ENCODE measurements at regions of chr5 and their contacts with region 1.

Region 1: DNA sequence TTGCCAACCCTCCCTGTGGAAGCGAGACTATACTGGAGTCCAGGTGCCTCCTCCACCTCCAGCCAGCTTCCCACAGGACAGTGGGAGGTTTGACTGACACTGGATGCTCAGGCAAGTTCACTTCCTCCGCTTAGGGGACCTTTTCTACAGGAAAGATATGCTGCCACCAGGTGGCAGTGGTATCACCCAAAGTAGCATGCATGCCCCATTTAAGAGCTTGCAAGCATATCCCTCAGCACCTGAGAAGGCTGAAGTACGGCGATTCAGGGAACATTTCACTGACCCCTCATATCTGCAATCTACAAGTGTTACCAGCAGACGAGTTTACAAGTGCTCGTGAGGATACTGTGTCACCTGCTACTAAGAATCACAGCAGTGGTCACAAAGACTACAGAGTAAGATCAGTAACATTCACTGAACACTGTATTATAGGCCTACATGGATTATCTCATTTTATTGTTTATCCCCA is 75.5 kb downstream of the KLHL3 start:
- DNase-seq: peak; percentile 60 to 85 (median 67)
- ATAC-seq: peak; percentile 94
- H3K4me3 ChIP-seq: no peak overlapping the region
- H3K4me3 Mint-ChIP-seq: no peak overlapping the region
- H3K27ac ChIP-seq: no peak overlapping the region
- H3K27ac Mint-ChIP-seq: peak overlapping the region; percentile 3
- H3K4me1 ChIP-seq: peaks cover 6% of the 10 kb centered on the region
- H3K4me1 Mint-ChIP-seq: peaks cover 14% of the 10 kb centered on the region
- H3K27me3 ChIP-seq: no peaks in the 10 kb centered on the region
- H3K27me3 Mint-ChIP-seq: no peaks in the 10 kb centered on the region
- CTCF ChIP-seq: peak; percentile 89

Region 2: DNA sequence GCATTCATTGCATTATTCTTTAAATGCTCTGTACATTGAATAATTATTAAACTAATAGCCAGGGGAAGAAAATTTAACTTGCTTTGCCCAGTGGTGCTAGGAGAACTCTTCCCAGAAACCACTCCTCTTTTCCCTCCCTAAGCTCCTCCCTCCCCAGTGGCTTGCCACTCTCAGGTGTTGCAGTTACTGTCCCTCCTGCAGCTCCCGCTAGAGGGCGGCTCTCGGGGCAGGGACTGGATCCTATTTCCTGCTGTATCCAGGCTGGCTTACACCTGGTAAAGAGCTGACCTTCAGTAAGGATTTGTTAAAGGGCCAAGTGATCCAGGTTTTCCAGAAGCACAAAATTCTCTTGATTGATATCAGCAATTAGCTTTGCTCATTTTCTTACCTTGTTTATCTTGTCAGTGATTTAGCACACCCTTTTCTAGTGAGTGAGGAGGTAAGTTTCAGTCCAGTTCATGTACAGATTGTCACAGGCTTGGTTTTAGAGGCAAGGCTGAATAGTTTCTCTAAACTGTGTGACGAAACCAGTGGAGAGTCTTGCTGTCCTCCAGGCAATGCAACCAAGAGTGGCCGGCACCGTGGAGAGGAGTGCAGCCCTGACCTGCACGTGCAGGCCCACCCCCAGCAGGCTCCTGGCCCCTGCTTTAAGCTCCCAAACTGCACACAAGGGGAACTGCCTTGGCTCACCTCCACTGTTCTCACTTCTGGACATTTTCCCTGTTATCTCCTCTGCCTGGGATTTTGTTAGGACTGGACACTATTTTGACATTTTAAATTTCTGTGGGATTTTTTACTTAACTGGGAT is 585.0 kb before region 1 on chr5:
- CTCF ChIA-PET with region 1: no interaction called
- POLR2A ChIA-PET with region 1: no interaction called
- intact Hi-C with region 1: no loop called
- DNase-seq: no peak
- ATAC-seq: no peak
- H3K4me3 ChIP-seq: no peak overlapping the region
- H3K4me3 Mint-ChIP-seq: no peak overlapping the region
- H3K27ac ChIP-seq: no peak overlapping the region
- H3K27ac Mint-ChIP-seq: no peak overlapping the region
- H3K4me1 ChIP-seq: no peaks in the 10 kb centered on the region
- H3K4me1 Mint-ChIP-seq: no peaks in the 10 kb centered on the region
- H3K27me3 ChIP-seq: no peaks in the 10 kb centered on the region
- H3K27me3 Mint-ChIP-seq: peaks cover 20% of the 10 kb centered on the region
- CTCF ChIP-seq: no peak

Region 3: GRCh38 chr5:137629646-137630045 is 30.7 kb before region 1 on chr5:
- CTCF ChIA-PET with region 1: interaction called, 9 read pairs
- POLR2A ChIA-PET with region 1: no interaction called
- intact Hi-C with region 1: loop called in 1 of 2 experiments (anchors 1 kb)
- DNase-seq: peak in 5 of 14 experiments; percentile 7 to 75 (median 58)
- ATAC-seq: peak; percentile 61
- H3K4me3 ChIP-seq: no peak overlapping the region
- H3K4me3 Mint-ChIP-seq: no peak overlapping the region
- H3K27ac ChIP-seq: no peak overlapping the region
- H3K27ac Mint-ChIP-seq: no peak overlapping the region
- H3K4me1 ChIP-seq: no peaks in the 10 kb centered on the region
- H3K4me1 Mint-ChIP-seq: no peaks in the 10 kb centered on the region
- H3K27me3 ChIP-seq: no peaks in the 10 kb centered on the region
- H3K27me3 Mint-ChIP-seq: no peaks in the 10 kb centered on the region
- CTCF ChIP-seq: peak; percentile 88

Region 4: DNA sequence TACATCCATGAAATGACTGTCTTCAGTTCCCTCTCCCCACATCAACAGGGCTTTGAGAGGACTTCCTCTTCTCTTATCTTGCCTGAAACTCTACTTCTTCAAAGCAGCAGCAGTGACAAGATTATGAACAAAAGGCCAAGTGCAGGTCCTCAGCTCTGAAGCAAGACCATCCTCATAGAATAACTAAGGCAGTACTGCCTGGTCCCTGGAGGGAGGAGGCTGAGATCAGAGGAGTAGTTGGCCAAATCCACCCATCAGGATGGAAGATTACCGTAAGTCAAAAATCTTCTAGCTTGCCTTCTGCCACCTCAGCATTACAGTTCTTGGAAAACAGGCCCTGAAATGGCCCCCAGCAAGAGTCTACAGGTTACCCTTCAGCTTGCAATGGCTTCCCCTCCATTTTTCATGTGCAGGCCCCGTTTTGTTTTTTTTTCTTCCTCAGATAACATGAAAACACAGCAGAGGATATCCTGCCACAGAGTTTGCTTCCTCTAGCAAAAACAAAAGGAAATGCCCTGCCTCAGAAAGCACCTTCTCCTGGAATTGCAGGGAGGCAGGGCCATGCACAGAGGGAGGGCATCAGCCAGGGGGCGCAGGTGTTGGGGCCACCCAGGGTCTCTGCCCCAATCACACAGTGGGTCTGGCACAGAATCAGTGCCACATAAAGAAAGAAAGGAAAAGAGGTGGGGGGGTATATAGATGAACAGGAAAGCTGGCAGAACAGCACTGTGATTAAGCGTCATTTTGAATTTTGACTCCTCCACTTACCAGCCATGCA is 35.5 kb after region 1 on chr5:
- CTCF ChIA-PET with region 1: interaction called, 10 read pairs
- POLR2A ChIA-PET with region 1: interaction called, 7 read pairs
- intact Hi-C with region 1: loop called in 1 of 2 experiments (anchors 5 kb)
- DNase-seq: peak in 12 of 14 experiments; percentile 9 to 70 (median 34)
- ATAC-seq: peak; percentile 90
- H3K4me3 ChIP-seq: peak overlapping the region; percentile 11
- H3K4me3 Mint-ChIP-seq: peak overlapping the region; percentile 84
- H3K27ac ChIP-seq: peak overlapping the region; percentile 63 to 65
- H3K27ac Mint-ChIP-seq: peak overlapping the region; percentile 88
- H3K4me1 ChIP-seq: peaks cover 50% of the 10 kb centered on the region
- H3K4me1 Mint-ChIP-seq: peaks cover 71% of the 10 kb centered on the region
- H3K27me3 ChIP-seq: no peaks in the 10 kb centered on the region
- H3K27me3 Mint-ChIP-seq: no peaks in the 10 kb centered on the region
- CTCF ChIP-seq: peak; percentile 54

Region 5: DNA sequence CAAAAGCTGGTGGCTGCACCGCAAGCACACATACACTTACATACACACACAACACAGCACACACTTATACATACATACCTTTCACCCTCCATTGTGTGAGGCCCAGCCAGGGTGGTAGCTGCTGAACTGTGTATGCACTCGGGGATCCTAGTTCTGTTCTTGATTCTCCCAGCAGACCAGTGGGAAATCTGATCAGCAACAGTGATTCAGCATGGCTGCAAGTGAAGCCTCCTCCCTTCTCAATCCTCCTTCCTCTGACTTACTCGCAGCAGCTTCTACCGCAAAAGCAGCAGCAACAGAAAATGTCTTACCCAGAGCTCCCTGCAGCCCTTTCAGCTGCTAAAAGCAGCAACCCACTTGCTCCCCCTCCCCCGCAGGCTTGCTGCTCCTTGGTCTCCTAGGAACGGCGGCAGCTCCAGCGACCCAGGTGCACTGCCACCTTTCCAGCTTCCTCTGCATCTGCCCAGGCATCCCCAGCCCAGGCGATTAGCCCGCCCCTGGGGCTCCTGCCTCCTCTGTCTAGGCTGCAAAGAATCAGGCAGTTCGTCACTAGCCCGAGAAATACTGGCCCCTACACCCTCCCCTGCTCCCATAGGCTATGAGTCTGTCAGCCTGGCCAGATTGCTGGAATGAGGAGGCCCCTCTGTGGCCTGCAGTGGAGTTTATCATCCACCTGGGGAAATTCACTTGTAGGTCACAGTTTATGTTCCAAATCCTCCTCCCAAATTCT is 75.3 kb after region 1 on chr5 and contains the start of gene KLHL3:
- CTCF ChIA-PET with region 1: interaction called, 88 read pairs
- POLR2A ChIA-PET with region 1: interaction called, 30 read pairs
- intact Hi-C with region 1: loop called in 1 of 2 experiments (anchors 2 kb)
- DNase-seq: peak in 13 of 14 experiments; percentile 17 to 65 (median 38)
- ATAC-seq: peak; percentile 48
- H3K4me3 ChIP-seq: peak within 1 kb of the TSS; percentile 72
- H3K4me3 Mint-ChIP-seq: no peak within 1 kb of the TSS
- H3K27ac ChIP-seq: peak within 1 kb of the TSS; percentile 31 to 68
- H3K27ac Mint-ChIP-seq: no peak within 1 kb of the TSS
- H3K4me1 ChIP-seq: peaks cover 42% of the 10 kb centered on the region
- H3K4me1 Mint-ChIP-seq: peaks cover 16% of the 10 kb centered on the region
- H3K27me3 ChIP-seq: no peaks in the 10 kb centered on the region
- H3K27me3 Mint-ChIP-seq: no peaks in the 10 kb centered on the region
- CTCF ChIP-seq: no peak
- total RNA-seq, gene KLHL3: 22.0 to 25.9 TPM

Region 6: GRCh38 chr5:137743031-137743640 is 82.8 kb after region 1 on chr5:
- CTCF ChIA-PET with region 1: interaction called, 88 read pairs
- POLR2A ChIA-PET with region 1: interaction called, 29 read pairs
- intact Hi-C with region 1: loop called (anchors 1 kb)
- DNase-seq: peak in 13 of 14 experiments; percentile 23 to 86 (median 52)
- ATAC-seq: peak; percentile 91
- H3K4me3 ChIP-seq: no peak overlapping the region
- H3K4me3 Mint-ChIP-seq: no peak overlapping the region
- H3K27ac ChIP-seq: no peak overlapping the region
- H3K27ac Mint-ChIP-seq: no peak overlapping the region
- H3K4me1 ChIP-seq: peaks cover 5% of the 10 kb centered on the region
- H3K4me1 Mint-ChIP-seq: peaks cover 20% of the 10 kb centered on the region
- H3K27me3 ChIP-seq: no peaks in the 10 kb centered on the region
- H3K27me3 Mint-ChIP-seq: no peaks in the 10 kb centered on the region
- CTCF ChIP-seq: peak; percentile 78